Activated naive CD4-positive, alpha-beta T cell treated with anti-CD3 and anti-CD28 coated beads for 36 hours (primary cell): ENCODE measurements at regions of chr2 and their contacts with region 1.

Region 1: DNA sequence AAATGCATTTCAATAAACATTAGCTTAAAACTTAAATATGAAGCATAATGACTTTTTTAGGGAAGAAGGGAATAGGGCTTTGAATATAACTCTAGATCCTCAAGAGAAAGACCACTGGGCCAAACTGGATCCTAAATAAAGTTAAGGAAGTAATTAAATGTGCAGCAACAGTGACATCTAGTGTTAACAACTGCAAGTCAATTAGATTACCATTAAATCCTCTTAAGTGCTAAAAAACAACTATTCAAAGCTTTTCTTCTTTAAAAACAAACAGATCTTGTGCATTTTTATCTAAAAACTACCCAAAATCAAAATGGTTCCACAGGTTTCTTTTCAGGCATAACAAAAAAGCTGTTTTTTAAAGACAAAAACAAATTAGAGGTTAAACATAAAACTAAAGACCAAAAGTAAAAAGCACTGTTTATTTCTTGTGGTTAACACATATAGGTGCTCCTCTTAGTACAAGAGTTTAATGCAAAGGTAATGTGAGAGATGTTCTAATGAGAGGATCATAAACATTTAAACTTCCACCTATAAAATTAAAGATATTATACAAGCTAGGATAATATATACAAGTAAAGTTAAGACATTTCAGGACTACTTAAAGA is 111.4 kb downstream of the THADA start:
- DNase-seq: no peak
- H3K4me3 Mint-ChIP-seq: no peak overlapping the region
- H3K27ac Mint-ChIP-seq: no peak overlapping the region
- H3K4me1 Mint-ChIP-seq: no peaks in the 10 kb centered on the region
- H3K27me3 Mint-ChIP-seq: no peaks in the 10 kb centered on the region

Region 2: DNA sequence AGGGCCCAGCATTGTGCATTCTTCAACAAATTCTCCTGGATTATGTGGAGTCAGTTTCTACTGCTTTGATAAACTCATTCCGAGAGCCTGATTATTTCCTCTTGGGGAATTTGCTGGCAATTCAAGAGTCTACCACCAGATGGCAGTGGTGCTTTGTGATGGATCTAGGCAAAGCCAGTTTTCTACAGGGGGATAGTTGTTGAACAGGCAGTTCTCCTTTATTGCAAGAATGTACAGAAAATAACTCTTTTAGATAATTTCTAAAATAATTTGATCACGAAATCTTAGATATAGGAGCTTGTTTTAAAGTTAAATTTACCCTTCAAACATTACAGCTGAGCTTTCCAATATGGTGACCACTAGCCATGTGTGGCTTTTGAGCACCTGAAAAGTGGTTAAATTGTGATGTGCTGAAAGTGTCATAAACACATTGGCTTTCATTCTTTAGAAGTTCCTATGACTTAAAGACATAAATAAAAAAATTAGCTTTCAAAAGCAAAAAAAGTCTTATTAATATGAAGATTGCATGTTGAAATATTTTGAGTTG is 625.3 kb before region 1 on chr2:
- CTCF ChIA-PET with region 1: interaction called, 3 read pairs
- intact Hi-C with region 1: loop called (anchors 1 kb)
- DNase-seq: peak; percentile 91
- H3K4me3 Mint-ChIP-seq: no peak overlapping the region
- H3K27ac Mint-ChIP-seq: no peak overlapping the region
- H3K4me1 Mint-ChIP-seq: peaks cover 12% of the 10 kb centered on the region
- H3K27me3 Mint-ChIP-seq: no peaks in the 10 kb centered on the region

Region 3: GRCh38 chr2:42944779-42945415 is 539.5 kb before region 1 on chr2:
- CTCF ChIA-PET with region 1: interaction called, 34 read pairs
- intact Hi-C with region 1: loop called (anchors 1 kb)
- DNase-seq: no peak
- H3K4me3 Mint-ChIP-seq: no peak overlapping the region
- H3K27ac Mint-ChIP-seq: no peak overlapping the region
- H3K4me1 Mint-ChIP-seq: peaks cover 2% of the 10 kb centered on the region
- H3K27me3 Mint-ChIP-seq: no peaks in the 10 kb centered on the region

Region 4: GRCh38 chr2:42974721-42975717 is 509.4 kb before region 1 on chr2:
- CTCF ChIA-PET with region 1: interaction called, 22 read pairs
- intact Hi-C with region 1: loop called (anchors 10 kb)
- DNase-seq: peak; percentile 69
- H3K4me3 Mint-ChIP-seq: no peak overlapping the region
- H3K27ac Mint-ChIP-seq: no peak overlapping the region
- H3K4me1 Mint-ChIP-seq: peaks cover 13% of the 10 kb centered on the region
- H3K27me3 Mint-ChIP-seq: no peaks in the 10 kb centered on the region

Region 5: GRCh38 chr2:43239981-43240761 is 244.3 kb before region 1 on chr2:
- CTCF ChIA-PET with region 1: interaction called, 11 read pairs
- intact Hi-C with region 1: no loop called
- DNase-seq: no peak
- H3K4me3 Mint-ChIP-seq: no peak overlapping the region
- H3K27ac Mint-ChIP-seq: no peak overlapping the region
- H3K4me1 Mint-ChIP-seq: peaks cover 8% of the 10 kb centered on the region
- H3K27me3 Mint-ChIP-seq: no peaks in the 10 kb centered on the region

Region 6: GRCh38 chr2:43343573-43344304 is 140.7 kb before region 1 on chr2:
- CTCF ChIA-PET with region 1: no interaction called
- intact Hi-C with region 1: no loop called
- DNase-seq: no peak
- H3K4me3 Mint-ChIP-seq: no peak overlapping the region
- H3K27ac Mint-ChIP-seq: no peak overlapping the region
- H3K4me1 Mint-ChIP-seq: no peaks in the 10 kb centered on the region
- H3K27me3 Mint-ChIP-seq: no peaks in the 10 kb centered on the region